ENCODE measurements at regions of chr11 and their contacts with region 1.

Region 1: GRCh38 chr11:120172054-120172911 is 34.4 kb upstream of the TRIM29 start:
- DNase-seq: peak; percentile 65 to 71
- H3K4me3 ChIP-seq: no peak overlapping the region
- H3K27ac ChIP-seq: no peak overlapping the region
- H3K4me1 ChIP-seq: peaks cover 0 to 22% (median 17%) of the 10 kb centered on the region in 4 donors
- H3K27me3 ChIP-seq: peaks cover 0 to 54% of the 10 kb centered on the region in 2 donors
- CTCF ChIP-seq: peak; percentile 78 to 85

Region 2: DNA sequence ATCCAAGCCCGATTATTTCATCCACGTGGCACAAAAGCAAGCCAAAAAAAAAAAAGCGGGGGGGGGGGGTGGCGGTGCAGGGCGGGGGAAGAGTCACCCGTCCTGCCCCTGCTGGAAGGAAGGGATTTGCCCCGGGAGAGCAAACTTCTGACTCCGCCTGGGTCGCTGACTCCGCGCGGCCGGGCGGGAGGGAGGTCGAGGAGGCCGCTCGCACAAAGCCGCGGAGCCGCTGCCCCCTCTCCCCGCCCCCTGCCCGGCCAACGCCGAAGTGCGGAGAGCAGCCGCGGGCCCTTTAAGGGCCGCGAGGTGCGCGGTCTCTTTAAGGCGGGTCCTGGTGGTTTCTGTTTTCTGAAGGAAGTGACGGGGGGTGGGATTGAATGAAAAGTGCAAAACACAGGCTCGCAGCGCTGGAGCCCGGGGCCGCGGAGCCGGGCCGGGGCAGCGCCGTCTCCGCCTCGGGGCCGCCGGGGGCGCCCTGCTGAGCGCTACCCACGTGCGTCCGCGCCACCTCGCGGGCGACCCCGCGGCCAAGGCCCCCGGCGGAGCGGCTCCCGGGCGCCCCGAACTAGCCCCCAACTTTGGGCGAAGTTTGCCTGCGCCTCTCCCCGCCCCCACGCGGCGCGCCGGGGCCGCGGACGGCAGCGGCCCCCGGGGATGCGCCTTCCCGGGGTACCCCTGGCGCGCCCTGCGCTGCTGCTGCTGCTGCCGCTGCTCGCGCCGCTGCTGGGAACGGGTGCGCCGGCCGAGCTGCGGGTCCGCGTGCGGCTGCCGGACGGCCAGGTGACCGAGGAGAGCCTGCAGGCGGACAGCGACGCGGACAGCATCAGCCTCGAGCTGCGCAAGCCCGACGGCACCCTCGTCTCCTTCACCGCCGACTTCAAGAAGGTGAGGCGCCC is 38.6 kb after region 1 on chr11 and contains the start of gene OAF:
- intact Hi-C with region 1: no loop called
- DNase-seq: peak in 1 of 2 donors; percentile 65
- H3K4me3 ChIP-seq: peak within 1 kb of the TSS; percentile 56 to 77
- H3K27ac ChIP-seq: peak within 1 kb of the TSS; percentile 50 to 54
- H3K4me1 ChIP-seq: peaks cover 0 to 24% (median 14%) of the 10 kb centered on the region in 4 donors
- H3K27me3 ChIP-seq: peaks cover 0 to 14% of the 10 kb centered on the region in 2 donors
- CTCF ChIP-seq: peak; percentile 10 to 15

Region 3: GRCh38 chr11:120229451-120230424 is 57.5 kb after region 1 on chr11:
- intact Hi-C with region 1: loop called (anchors 2 kb)
- DNase-seq: no peak
- H3K4me3 ChIP-seq: no peak overlapping the region
- H3K27ac ChIP-seq: no peak overlapping the region
- H3K4me1 ChIP-seq: peaks cover 0 to under 1% (median 0%) of the 10 kb centered on the region in 4 donors
- H3K27me3 ChIP-seq: peaks cover 0 to 32% of the 10 kb centered on the region in 2 donors
- CTCF ChIP-seq: peak; percentile 63 to 69

Region 4: GRCh38 chr11:120303004-120303637 is 130.8 kb after region 1 on chr11:
- intact Hi-C with region 1: loop called (anchors 5 kb)
- DNase-seq: peak; percentile 64 to 71
- H3K4me3 ChIP-seq: no peak overlapping the region
- H3K27ac ChIP-seq: no peak overlapping the region
- H3K4me1 ChIP-seq: peaks cover 0 to 36% (median 17%) of the 10 kb centered on the region in 4 donors
- H3K27me3 ChIP-seq: peaks cover 0 to 4% of the 10 kb centered on the region in 2 donors
- CTCF ChIP-seq: peak; percentile 74 to 82

Measured in tibial artery (tissue), 4 donors.